ENCODE measurements at regions of chr14 and their contacts with region 1.

Region 1: DNA sequence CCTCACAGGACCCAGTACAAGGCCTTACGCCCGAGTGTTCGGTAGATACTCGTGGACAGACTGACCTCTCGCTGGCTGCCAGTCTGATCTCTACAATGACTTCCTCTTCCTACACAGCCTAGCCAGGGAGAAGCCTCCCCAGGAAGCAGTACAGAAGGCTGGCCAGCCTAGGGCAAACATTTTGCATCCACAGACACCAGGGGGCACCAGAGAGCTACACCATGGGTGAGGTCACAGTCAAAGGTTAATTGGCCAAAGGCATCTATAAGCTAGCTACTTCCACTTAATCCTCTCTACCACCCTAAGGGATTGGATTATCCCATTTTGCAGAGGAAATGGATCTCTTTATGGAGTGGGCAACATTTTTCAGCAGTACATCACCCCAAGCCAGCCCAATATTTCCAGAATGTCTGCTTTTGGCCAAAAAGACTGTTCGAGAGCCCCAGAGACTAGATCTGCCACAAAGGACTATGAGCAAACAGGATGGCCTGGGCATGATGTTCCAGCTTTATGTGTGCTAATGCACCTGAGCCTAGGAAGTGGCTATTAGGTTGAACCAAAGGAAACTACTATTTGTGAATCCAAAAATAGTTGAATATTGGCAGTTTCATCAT is 14.6 kb upstream of the PNMA1 start:
- DNase-seq: peak; percentile 88
- H3K4me3 Mint-ChIP-seq: no peak overlapping the region
- H3K27ac Mint-ChIP-seq: peak overlapping the region; percentile 62
- H3K4me1 Mint-ChIP-seq: peaks cover 43% of the 10 kb centered on the region
- H3K27me3 Mint-ChIP-seq: no peaks in the 10 kb centered on the region

Region 2: GRCh38 chr14:73741386-73741875 is 12.6 kb after region 1 on chr14:
- CTCF ChIA-PET with region 1: interaction called, 54 read pairs
- POLR2A ChIA-PET with region 1: interaction called, 10 read pairs
- DNase-seq: peak; percentile 75
- H3K4me3 Mint-ChIP-seq: peak overlapping the region; percentile 76
- H3K27ac Mint-ChIP-seq: peak overlapping the region; percentile 98
- H3K4me1 Mint-ChIP-seq: peaks cover 74% of the 10 kb centered on the region
- H3K27me3 Mint-ChIP-seq: no peaks in the 10 kb centered on the region

Region 3: GRCh38 chr14:73753959-73754882 is 25.4 kb after region 1 on chr14:
- CTCF ChIA-PET with region 1: interaction called, 57 read pairs
- POLR2A ChIA-PET with region 1: interaction called, 9 read pairs
- DNase-seq: peak; percentile 67
- H3K4me3 Mint-ChIP-seq: peak overlapping the region; percentile 86
- H3K27ac Mint-ChIP-seq: peak overlapping the region; percentile 82
- H3K4me1 Mint-ChIP-seq: peaks cover 95% of the 10 kb centered on the region
- H3K27me3 Mint-ChIP-seq: no peaks in the 10 kb centered on the region

Region 4: DNA sequence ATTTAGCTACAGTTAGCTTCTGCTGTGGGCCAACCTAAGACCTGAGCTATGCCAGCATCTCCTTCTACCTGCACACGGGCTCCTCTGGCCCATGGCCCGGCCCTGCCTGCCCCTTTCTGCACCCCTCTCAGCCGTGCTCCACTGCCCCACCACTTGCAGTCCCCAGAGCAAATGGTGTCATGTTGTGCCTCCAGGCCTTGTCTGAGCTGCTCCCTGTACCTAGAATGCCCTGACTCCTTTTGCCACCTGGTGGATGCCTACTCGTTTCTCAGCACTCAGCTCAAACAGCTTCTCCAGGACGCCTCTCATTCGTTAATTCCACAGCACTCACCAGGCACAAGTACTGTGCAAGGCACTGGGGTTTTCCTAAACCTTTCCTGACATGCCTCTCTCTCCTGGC is 48.6 kb after region 1 on chr14:
- CTCF ChIA-PET with region 1: interaction called, 15 read pairs
- POLR2A ChIA-PET with region 1: interaction called, 3 read pairs
- DNase-seq: no peak
- H3K4me3 Mint-ChIP-seq: no peak overlapping the region
- H3K27ac Mint-ChIP-seq: no peak overlapping the region
- H3K4me1 Mint-ChIP-seq: peaks cover 59% of the 10 kb centered on the region
- H3K27me3 Mint-ChIP-seq: no peaks in the 10 kb centered on the region

Region 5: DNA sequence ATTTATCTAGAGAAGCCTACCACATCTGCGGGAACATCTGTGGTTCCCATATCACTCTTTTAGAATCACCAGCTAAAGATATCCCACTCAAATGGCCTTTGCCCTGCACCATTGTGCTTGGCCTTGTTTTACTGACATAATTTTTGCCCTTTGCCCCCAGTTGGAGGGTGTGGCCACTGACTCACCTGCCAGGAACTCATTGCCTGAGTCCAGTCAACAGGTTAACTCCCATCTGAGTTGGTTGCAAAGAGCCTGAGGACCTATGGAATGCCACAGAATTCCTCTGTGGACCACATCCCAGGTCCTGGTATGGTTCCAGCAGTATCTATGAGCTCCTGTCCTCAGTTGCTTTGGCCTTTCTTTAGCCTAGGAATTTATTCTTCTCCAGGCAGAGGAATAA is 67.1 kb after region 1 on chr14:
- CTCF ChIA-PET with region 1: interaction called, 12 read pairs
- POLR2A ChIA-PET with region 1: no interaction called
- DNase-seq: no peak
- H3K4me3 Mint-ChIP-seq: no peak overlapping the region
- H3K27ac Mint-ChIP-seq: no peak overlapping the region
- H3K4me1 Mint-ChIP-seq: no peaks in the 10 kb centered on the region
- H3K27me3 Mint-ChIP-seq: no peaks in the 10 kb centered on the region

Region 6: DNA sequence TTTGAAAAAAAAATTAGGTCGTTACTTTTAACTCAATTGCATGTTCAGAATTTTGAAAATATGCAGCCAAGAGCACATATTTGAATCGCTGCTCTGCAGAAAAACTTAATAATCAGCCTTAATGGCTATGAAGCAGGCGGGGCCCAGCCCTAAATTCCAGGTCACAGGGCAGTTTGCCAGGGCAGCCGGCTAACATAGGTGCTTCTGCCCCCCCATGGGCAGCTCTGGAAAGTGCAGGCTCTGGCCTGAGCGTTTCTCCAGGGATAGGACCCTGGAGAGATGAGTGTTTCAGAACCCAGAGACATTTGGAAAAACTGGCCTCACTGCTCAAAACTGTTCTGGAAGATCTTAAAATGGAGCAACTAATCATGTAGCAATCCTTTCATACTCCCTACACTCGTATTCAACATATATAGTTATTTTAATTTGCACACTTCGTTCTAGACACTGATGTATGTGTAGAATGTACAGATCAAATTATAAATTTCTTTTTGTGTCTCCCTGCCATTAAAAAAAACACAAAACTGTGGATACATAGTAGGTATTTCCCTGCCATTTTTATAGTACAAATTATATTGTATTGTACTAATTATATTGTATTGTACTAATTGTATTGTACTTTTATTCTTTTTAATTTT is 96.8 kb after region 1 on chr14:
- CTCF ChIA-PET with region 1: interaction called, 130 read pairs
- POLR2A ChIA-PET with region 1: interaction called, 8 read pairs
- DNase-seq: peak; percentile 82
- H3K4me3 Mint-ChIP-seq: no peak overlapping the region
- H3K27ac Mint-ChIP-seq: no peak overlapping the region
- H3K4me1 Mint-ChIP-seq: peaks cover 24% of the 10 kb centered on the region
- H3K27me3 Mint-ChIP-seq: peaks cover 5% of the 10 kb centered on the region

Region 7: DNA sequence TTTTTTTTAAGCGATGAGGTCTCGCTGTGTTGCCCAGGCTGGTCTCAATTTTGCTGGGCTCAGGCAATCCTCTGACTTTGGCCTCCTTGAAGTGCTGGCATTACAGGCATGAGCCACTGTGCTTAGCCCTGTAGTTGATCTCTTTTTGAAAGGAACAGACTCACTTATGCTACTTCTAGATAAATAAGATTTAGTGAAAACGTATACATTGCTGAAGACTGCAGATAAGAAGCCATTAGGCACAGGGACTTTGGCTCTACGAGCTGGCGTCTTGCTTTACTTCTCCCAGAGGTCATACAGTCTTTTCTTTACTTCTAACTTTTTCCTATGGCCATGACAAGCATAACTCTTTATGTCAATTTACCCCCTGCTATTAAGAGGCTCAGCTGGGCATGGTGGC is 132.2 kb after region 1 on chr14:
- CTCF ChIA-PET with region 1: no interaction called
- POLR2A ChIA-PET with region 1: no interaction called
- DNase-seq: no peak
- H3K4me3 Mint-ChIP-seq: no peak overlapping the region
- H3K27ac Mint-ChIP-seq: no peak overlapping the region
- H3K4me1 Mint-ChIP-seq: no peaks in the 10 kb centered on the region
- H3K27me3 Mint-ChIP-seq: no peaks in the 10 kb centered on the region